OCI-LY7 (cell line): ENCODE measurements at regions of chr22 and their contacts with region 1.

Region 1: DNA sequence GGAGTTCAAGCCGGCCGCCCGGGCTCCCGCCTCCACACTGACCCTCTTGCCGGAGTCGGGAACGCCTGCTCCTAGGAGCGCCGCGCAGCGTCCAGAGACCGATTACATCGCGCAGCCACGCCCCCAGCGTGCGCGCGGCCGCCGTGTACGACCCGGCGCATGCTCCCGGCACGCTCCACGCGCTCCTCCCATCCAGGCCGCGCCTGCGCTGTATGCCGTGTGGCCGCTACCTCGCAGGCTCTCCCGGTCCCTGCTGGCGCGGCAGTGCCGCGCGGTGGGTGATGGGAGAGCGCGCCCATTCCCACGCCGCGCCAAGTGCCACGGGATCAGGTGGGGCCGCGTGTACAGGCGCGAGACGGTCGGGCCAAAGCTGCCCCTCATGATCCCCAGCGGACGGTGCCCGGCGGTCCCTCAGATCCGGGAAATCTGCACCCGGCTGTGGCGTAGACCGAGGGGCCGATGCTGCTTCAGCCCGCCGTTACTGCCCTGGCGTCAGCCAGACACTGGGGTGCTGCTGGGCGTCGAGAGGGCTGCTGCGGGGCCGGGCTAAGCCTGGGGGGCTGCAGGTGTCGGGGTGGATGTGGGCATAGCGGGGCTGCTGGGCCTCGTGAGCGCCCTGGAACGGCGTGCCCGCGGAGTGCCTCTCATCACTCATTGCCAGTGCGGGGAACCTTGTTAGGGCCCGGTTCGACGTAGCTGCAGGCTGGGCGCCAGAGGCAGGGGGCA is at the starts of genes GNB1L and RTL10:
- DNase-seq: peak; percentile 98
- H3K4me3 ChIP-seq: peak within 1 kb of the TSS; percentile 91
- H3K27ac ChIP-seq: peak within 1 kb of the TSS; percentile 84
- H3K4me1 ChIP-seq: peaks cover 37% of the 10 kb centered on the region
- CTCF ChIP-seq: 0 out of 2 replicates have a peak, but pooled peaks have one; percentile 20
- total RNA-seq, gene GNB1L: 21.2 and 26.7 TPM in 2 replicates
- total RNA-seq, gene RTL10: 25.5 and 28.2 TPM in 2 replicates

Region 2: GRCh38 chr22:19772422-19773324 is 82.3 kb before region 1 on chr22:
- CTCF ChIA-PET with region 1: no interaction called
- POLR2A ChIA-PET with region 1: no interaction called
- intact Hi-C with region 1: loop called (anchors 2 kb)
- DNase-seq: peak; percentile 98
- H3K4me3 ChIP-seq: peak overlapping the region; percentile 60
- H3K27ac ChIP-seq: peak overlapping the region; percentile 81
- H3K4me1 ChIP-seq: peaks cover 53% of the 10 kb centered on the region
- CTCF ChIP-seq: peak; percentile 72

Region 3: DNA sequence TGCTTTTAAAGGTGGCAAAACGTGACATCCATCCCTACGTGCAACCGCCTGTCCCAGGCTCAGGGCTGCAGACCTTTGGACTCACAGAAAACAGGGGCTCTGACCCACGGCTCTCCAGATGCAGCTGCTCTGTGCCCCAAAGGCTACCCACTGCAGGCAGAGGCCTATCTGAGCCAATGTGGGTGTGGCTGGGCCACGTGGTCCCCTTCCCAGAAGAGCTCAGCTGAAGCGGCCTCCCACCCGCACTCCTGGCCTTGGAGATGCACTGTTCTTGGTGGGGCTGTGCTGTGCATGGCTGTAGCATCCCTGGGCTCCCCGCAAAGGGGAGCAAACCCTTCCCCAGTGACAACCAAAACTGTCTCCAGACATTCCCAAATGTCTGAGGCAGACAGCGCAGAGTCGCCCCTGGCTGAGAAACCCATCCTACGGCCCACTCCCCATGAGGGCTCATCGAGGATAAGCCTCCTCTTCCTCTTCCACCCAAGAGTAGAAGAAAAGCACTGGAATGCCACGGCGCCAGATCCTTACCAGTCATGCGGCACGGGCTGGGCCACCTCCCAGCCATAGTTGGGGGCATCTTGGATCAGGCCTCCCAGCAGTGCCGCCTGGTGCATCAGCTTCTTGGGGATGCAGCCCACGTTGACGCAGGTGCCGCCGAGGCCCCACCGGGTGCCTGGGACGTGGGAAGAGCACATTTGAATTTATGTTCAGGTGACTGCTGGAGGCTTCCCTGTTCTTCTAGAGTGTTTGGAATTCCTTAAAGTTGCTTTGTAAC is 63.6 kb after region 1 on chr22:
- CTCF ChIA-PET with region 1: no interaction called
- POLR2A ChIA-PET with region 1: no interaction called
- intact Hi-C with region 1: no loop called
- DNase-seq: no peak
- H3K4me3 ChIP-seq: no peak overlapping the region
- H3K27ac ChIP-seq: no peak overlapping the region
- H3K4me1 ChIP-seq: peaks cover 4% of the 10 kb centered on the region
- CTCF ChIP-seq: no peak

Region 4: DNA sequence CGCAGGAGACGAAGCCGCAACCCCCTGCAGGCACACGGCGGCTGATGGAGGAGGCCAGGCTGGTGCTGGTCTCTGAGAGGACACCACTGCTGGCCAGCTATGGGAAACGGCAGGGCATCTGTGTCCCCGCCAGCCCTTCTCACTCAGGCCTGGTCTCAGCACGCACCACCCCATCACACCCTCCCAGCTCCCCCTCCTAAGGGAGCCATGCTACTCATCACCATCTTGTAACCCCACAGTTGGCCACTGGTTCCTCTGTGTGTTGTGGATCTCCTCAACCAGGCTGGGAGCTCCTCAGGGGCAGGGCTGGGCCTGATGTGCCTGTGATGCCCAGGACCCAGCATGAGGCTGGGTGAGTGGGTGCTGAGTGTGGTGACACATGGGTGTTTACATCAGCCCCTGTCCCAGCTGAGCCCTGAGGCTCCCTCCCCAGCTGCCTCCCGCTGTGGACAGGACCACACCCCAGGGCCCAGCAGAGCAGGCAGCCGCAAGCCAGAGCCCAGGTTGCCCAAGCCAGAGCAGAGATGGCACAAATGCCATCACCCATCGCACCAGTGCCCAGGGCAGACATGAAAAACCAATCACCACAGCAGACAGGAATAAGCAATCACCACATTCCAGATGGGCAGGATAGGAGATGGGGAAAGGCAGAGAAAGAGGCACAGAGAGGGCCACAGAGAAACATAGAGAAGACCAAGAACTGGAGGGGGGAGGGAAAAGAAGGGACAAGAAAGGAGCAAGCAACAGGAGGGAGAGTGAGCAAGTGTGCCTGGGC is 153.5 kb after region 1 on chr22:
- CTCF ChIA-PET with region 1: no interaction called
- POLR2A ChIA-PET with region 1: no interaction called
- intact Hi-C with region 1: no loop called
- DNase-seq: no peak
- H3K4me3 ChIP-seq: no peak overlapping the region
- H3K27ac ChIP-seq: no peak overlapping the region
- H3K4me1 ChIP-seq: no peaks in the 10 kb centered on the region
- CTCF ChIP-seq: no peak

Region 5: GRCh38 chr22:20044495-20045151 is 189.7 kb after region 1 on chr22:
- CTCF ChIA-PET with region 1: no interaction called
- POLR2A ChIA-PET with region 1: no interaction called
- intact Hi-C with region 1: no loop called
- DNase-seq: no peak
- H3K4me3 ChIP-seq: no peak overlapping the region
- H3K27ac ChIP-seq: no peak overlapping the region
- H3K4me1 ChIP-seq: no peaks in the 10 kb centered on the region
- CTCF ChIP-seq: no peak